Activated naive CD4-positive, alpha-beta T cell treated with anti-CD3 and anti-CD28 coated beads, Interleukin-2, amount 10 ng/mL, durations not matched to agents 7 days and 5 days (primary cell): ENCODE measurements at regions of chr19 and their contacts with region 1.

Region 1: GRCh38 chr19:16572332-16573211 is at the start of gene SLC35E1:
- DNase-seq: peak; percentile 94
- H3K4me3 Mint-ChIP-seq: peak within 1 kb of the TSS; percentile 92
- H3K27ac Mint-ChIP-seq: peak within 1 kb of the TSS; percentile 92
- H3K4me1 Mint-ChIP-seq: peaks cover 65% of the 10 kb centered on the region
- H3K27me3 Mint-ChIP-seq: no peaks in the 10 kb centered on the region

Region 2: DNA sequence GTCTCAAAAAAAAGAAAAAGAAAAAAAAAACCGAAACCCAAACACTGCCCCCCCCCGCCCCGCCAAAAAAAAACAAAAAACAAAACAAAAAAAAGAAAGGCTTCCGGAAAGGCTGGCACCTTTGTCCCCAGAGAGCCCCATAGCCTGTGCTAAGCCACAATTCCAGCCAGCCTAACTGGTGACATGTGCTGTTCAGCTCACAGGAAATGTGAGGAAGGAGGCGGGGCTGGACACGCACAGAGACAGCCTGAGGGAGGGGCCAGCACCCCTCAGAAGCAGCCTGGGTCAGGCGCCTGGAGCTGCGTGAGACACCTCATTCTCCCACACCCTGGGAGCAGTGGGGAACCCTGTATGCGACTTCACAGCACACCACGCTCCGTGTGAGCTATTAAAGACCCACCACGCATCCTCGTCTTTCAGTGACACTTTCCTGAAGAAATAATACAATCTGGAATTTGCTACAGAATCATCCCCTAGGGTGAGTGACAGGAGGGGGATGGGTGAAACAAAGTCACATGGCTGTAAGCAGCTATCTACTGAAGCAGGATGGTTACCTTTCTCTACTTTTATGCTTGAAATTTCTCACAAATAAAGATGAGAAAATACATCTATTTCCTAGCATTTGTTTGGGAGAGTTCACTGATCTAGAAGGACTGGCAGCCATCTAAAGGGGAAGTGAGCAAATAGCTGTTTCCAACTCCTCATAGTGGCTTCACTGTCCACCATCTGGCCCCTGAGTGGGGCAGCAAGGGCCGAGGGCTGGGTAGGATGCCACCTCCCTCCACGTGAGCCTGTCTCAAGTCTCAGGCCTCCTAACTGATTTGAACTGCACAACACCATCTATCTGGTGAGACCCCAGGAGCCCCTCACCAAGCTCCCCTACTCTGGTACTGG is 11.9 kb after region 1 on chr19:
- CTCF ChIA-PET with region 1: interaction called, 11 read pairs
- DNase-seq: peak; percentile 96
- H3K4me3 Mint-ChIP-seq: peak overlapping the region; percentile 73
- H3K27ac Mint-ChIP-seq: peak overlapping the region; percentile 97
- H3K4me1 Mint-ChIP-seq: peaks cover 82% of the 10 kb centered on the region
- H3K27me3 Mint-ChIP-seq: no peaks in the 10 kb centered on the region

Region 3: GRCh38 chr19:16615808-16616207 is 43.2 kb after region 1 on chr19:
- CTCF ChIA-PET with region 1: no interaction called
- DNase-seq: no peak
- H3K4me3 Mint-ChIP-seq: no peak overlapping the region
- H3K27ac Mint-ChIP-seq: peak overlapping the region; percentile 68
- H3K4me1 Mint-ChIP-seq: peaks cover 56% of the 10 kb centered on the region
- H3K27me3 Mint-ChIP-seq: no peaks in the 10 kb centered on the region